ENCODE measurements at regions of chr1 and their contacts with region 1.

Region 1: DNA sequence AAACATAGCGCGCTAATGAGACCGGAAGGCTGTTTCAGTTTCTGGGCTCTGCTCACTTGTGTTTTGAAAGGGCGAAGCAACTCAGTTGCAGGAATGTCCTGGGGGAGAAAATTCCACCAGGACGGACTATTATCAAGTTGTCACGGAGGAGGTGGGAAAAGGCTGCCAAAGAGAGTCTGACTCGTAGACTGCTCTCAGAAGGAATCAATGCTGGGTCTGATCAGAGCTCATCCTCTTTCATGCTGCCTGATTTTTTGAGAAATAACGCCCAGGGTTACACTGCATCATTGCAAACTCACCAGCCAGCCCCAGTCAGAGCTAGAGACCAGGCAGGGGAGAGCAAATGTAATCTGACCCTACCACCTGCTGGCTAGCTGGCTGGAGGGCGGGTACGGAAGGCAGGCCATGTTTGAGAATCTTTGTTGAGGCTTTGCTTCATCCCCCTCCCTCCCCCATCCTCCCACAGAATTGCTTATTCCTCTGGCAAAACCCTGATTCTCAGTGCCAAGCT is 36.4 kb upstream of the BCL9 start:
- DNase-seq: no peak
- H3K4me3 ChIP-seq: peak overlapping the region in 1 of 2 donors; percentile 5
- H3K27ac ChIP-seq: peak overlapping the region; percentile 49
- H3K4me1 ChIP-seq: peaks cover 18% of the 10 kb centered on the region
- H3K27me3 ChIP-seq: no peaks in the 10 kb centered on the region
- CTCF ChIP-seq: no peak
- POLR2A ChIP-seq: no peak

Region 2: GRCh38 chr1:147302273-147302672 is 202.6 kb before region 1 on chr1:
- intact Hi-C with region 1: no loop called
- DNase-seq: no peak
- H3K4me3 ChIP-seq: no peak overlapping the region
- H3K27ac ChIP-seq: no peak overlapping the region
- H3K4me1 ChIP-seq: no peaks in the 10 kb centered on the region
- H3K27me3 ChIP-seq: no peaks in the 10 kb centered on the region
- CTCF ChIP-seq: no peak
- POLR2A ChIP-seq: no peak

Region 3: GRCh38 chr1:147541672-147542568 is 37.1 kb after region 1 on chr1:
- intact Hi-C with region 1: no loop called
- DNase-seq: no peak
- H3K4me3 ChIP-seq: peak overlapping the region; percentile 63 to 64
- H3K27ac ChIP-seq: peak overlapping the region; percentile 93
- H3K4me1 ChIP-seq: peaks cover 79% of the 10 kb centered on the region
- H3K27me3 ChIP-seq: no peaks in the 10 kb centered on the region
- CTCF ChIP-seq: no peak
- POLR2A ChIP-seq: no peak

Region 4: GRCh38 chr1:147627435-147628110 is 122.7 kb after region 1 on chr1:
- intact Hi-C with region 1: loop called (anchors 5 kb)
- DNase-seq: no peak
- H3K4me3 ChIP-seq: no peak overlapping the region
- H3K27ac ChIP-seq: no peak overlapping the region
- H3K4me1 ChIP-seq: peaks cover 9% of the 10 kb centered on the region
- H3K27me3 ChIP-seq: no peaks in the 10 kb centered on the region
- CTCF ChIP-seq: peak; percentile 69 to 84 (median 82)
- POLR2A ChIP-seq: no peak